Activated naive CD4-positive, alpha-beta T cell treated with anti-CD3 and anti-CD28 coated beads, Interleukin-2, amount 10 ng/mL, durations not matched to agents 7 days and 5 days (primary cell): ENCODE measurements at regions of chr19 and their contacts with region 1.

Region 1: DNA sequence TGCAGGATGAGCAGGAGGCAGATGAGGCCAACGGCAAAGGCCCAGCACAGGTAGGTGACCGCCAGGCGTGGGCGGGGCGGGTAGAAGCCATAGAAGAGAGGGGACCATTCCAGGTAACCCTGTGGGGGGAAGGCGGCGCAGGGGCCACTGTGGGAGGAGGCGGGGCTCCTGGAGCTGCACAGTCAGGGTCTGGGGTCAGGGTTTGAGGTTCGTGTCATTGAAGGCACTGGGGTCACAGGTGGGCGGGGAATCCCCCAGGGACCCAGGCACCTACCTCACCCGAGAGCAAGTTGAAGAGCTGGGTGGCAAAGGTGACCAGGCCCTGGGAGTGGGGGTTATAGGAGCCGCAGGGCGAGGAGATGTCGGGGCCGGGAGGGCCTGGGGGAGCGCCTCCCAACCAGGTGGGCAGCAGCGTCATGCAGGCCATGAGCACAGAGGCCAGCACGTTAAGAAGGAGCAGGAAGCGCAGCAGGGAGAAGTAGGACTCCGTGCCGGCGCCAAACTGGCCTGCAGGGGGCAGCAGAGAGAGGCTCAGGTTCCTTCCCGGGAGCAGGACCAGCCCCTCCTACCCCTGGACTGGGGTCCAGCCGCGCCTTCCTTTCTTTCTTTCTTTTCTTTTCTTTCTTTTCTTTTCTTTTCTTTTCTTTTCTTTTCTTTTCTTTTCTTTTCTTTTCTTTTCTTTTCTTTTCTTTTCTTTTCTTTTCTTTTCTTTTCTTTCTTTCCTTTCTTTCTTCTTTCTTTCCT is 4.6 kb downstream of the TMC4 start:
- DNase-seq: peak; percentile 94
- H3K4me3 Mint-ChIP-seq: no peak overlapping the region
- H3K27ac Mint-ChIP-seq: no peak overlapping the region
- H3K4me1 Mint-ChIP-seq: peaks cover 27% of the 10 kb centered on the region
- H3K27me3 Mint-ChIP-seq: peaks cover 50% of the 10 kb centered on the region

Region 2: GRCh38 chr19:54077334-54077733 is 91.0 kb before region 1 on chr19:
- CTCF ChIA-PET with region 1: no interaction called
- DNase-seq: no peak
- H3K4me3 Mint-ChIP-seq: no peak overlapping the region
- H3K27ac Mint-ChIP-seq: no peak overlapping the region
- H3K4me1 Mint-ChIP-seq: no peaks in the 10 kb centered on the region
- H3K27me3 Mint-ChIP-seq: peaks cover 3% of the 10 kb centered on the region

Region 3: GRCh38 chr19:54189735-54190502 is 21.6 kb after region 1 on chr19:
- CTCF ChIA-PET with region 1: interaction called, 10 read pairs
- DNase-seq: peak; percentile 100
- H3K4me3 Mint-ChIP-seq: peak overlapping the region; percentile 89
- H3K27ac Mint-ChIP-seq: peak overlapping the region; percentile 96
- H3K4me1 Mint-ChIP-seq: peaks cover 45% of the 10 kb centered on the region
- H3K27me3 Mint-ChIP-seq: no peaks in the 10 kb centered on the region

Region 4: GRCh38 chr19:54231077-54231931 is 63.0 kb after region 1 on chr19:
- CTCF ChIA-PET with region 1: interaction called, 11 read pairs
- DNase-seq: peak; percentile 90
- H3K4me3 Mint-ChIP-seq: no peak overlapping the region
- H3K27ac Mint-ChIP-seq: no peak overlapping the region
- H3K4me1 Mint-ChIP-seq: peaks cover 3% of the 10 kb centered on the region
- H3K27me3 Mint-ChIP-seq: peaks cover 56% of the 10 kb centered on the region

Region 5: GRCh38 chr19:54266133-54266532 is 97.8 kb after region 1 on chr19:
- CTCF ChIA-PET with region 1: interaction called, 16 read pairs
- DNase-seq: peak; percentile 84
- H3K4me3 Mint-ChIP-seq: no peak overlapping the region
- H3K27ac Mint-ChIP-seq: no peak overlapping the region
- H3K4me1 Mint-ChIP-seq: no peaks in the 10 kb centered on the region
- H3K27me3 Mint-ChIP-seq: peaks cover 27% of the 10 kb centered on the region